Endothelial cell of umbilical vein (primary cell): ENCODE measurements at regions of chr2 and their contacts with region 1.

Region 1: DNA sequence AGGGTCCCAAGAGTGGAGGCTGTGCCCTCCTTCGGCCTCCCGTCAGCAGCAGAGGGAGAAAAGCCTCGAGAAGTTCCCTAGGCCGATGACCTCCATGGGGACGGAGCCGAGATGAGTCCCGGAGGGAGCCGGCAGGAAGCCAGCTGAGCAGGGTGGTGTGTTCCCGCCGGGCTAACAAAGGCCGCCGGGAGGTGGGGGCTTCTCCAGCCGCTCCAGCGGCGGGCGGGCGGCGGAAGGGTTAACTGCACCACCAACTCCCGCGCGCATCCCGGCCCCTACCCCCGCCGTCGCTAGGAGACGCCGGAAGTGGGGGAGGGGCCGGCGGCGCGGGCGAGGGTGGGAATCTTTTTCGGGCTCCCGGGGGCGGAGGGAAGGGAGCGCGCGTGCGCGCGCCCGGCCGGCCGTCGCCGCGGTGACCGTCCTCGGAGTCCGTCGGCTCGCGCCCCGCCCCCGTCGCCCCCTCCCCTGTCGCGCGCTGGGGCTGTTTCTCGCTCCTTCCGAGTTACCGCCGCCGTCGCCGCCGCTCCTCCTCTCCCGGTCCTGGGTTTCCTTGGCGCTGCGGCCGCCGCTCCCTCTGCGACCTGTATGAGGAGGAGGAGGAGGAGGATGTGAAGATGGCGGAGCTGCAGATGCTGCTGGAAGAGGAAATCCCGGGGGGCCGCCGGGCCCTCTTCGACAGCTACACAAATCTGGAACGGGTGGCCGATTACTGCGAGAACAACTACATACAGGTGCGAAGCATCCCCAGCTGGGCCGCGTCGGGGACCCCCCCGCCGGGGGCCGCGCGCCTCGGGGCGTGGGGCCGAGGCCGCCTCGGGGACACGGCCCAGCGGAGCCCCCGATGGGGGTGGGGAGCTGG is at the start of gene ABI2:
- DNase-seq: peak; percentile 81
- H3K4me3 ChIP-seq: peak within 1 kb of the TSS; percentile 97 to 100 (median 99)
- H3K27ac ChIP-seq: peak within 1 kb of the TSS; percentile 79
- H3K4me1 ChIP-seq: peaks cover 19% of the 10 kb centered on the region
- H3K27me3 ChIP-seq: no peaks in the 10 kb centered on the region
- CTCF ChIP-seq: no peak
- POLR2A ChIP-seq: peak; percentile 81
- total RNA-seq, gene ABI2: 61.0 and 74.4 TPM in 2 replicates

Region 2: GRCh38 chr2:202911512-202912341 is 416.4 kb before region 1 on chr2 and contains the starts of genes CARF and WDR12:
- CTCF ChIA-PET with region 1: no interaction called
- POLR2A ChIA-PET with region 1: no interaction called
- dilution Hi-C with region 1: no loop called
- intact Hi-C with region 1: loop called (anchors 5 kb)
- DNase-seq: peak; percentile 96
- H3K4me3 ChIP-seq: peak within 1 kb of the TSS; percentile 84 to 97 (median 97)
- H3K27ac ChIP-seq: peak within 1 kb of the TSS; percentile 86
- H3K4me1 ChIP-seq: peaks cover 7% of the 10 kb centered on the region
- H3K27me3 ChIP-seq: no peaks in the 10 kb centered on the region
- CTCF ChIP-seq: no peak
- POLR2A ChIP-seq: peak; percentile 78
- total RNA-seq, gene CARF: 3.2 and 3.7 TPM in 2 replicates
- total RNA-seq, gene WDR12: 65.6 and 67.1 TPM in 2 replicates

Region 3: GRCh38 chr2:203340791-203341487 is 12.8 kb after region 1 on chr2:
- CTCF ChIA-PET with region 1: interaction called, 3 read pairs
- POLR2A ChIA-PET with region 1: no interaction called
- dilution Hi-C with region 1: no loop called
- intact Hi-C with region 1: loop called (anchors 1 kb)
- DNase-seq: peak; percentile 81
- H3K4me3 ChIP-seq: no peak overlapping the region
- H3K27ac ChIP-seq: peak overlapping the region; percentile 91
- H3K4me1 ChIP-seq: peaks cover 25% of the 10 kb centered on the region
- H3K27me3 ChIP-seq: no peaks in the 10 kb centered on the region
- CTCF ChIP-seq: no peak
- POLR2A ChIP-seq: peak; percentile 51

Region 4: GRCh38 chr2:203400816-203401585 is 72.9 kb after region 1 on chr2:
- CTCF ChIA-PET with region 1: no interaction called
- POLR2A ChIA-PET with region 1: no interaction called
- dilution Hi-C with region 1: no loop called
- intact Hi-C with region 1: loop called (anchors 5 kb)
- DNase-seq: peak; percentile 41
- H3K4me3 ChIP-seq: no peak overlapping the region
- H3K27ac ChIP-seq: peak overlapping the region; percentile 31
- H3K4me1 ChIP-seq: peaks cover 40% of the 10 kb centered on the region
- H3K27me3 ChIP-seq: no peaks in the 10 kb centered on the region
- CTCF ChIP-seq: no peak
- POLR2A ChIP-seq: no peak

Region 5: GRCh38 chr2:203437511-203437910 is 109.4 kb after region 1 on chr2:
- CTCF ChIA-PET with region 1: no interaction called
- POLR2A ChIA-PET with region 1: interaction called, 8 read pairs
- dilution Hi-C with region 1: no loop called
- intact Hi-C with region 1: loop called (anchors 5 kb)
- DNase-seq: no peak
- H3K4me3 ChIP-seq: no peak overlapping the region
- H3K27ac ChIP-seq: no peak overlapping the region
- H3K4me1 ChIP-seq: peaks cover 10% of the 10 kb centered on the region
- H3K27me3 ChIP-seq: no peaks in the 10 kb centered on the region
- CTCF ChIP-seq: no peak
- POLR2A ChIP-seq: no peak